Common myeloid progenitor, CD34-positive (primary cell): ENCODE measurements at regions of chr14 and their contacts with region 1.

Region 1: GRCh38 chr14:93953263-93953662 is 23.1 kb downstream of the ASB2 start:
- DNase-seq: no peak
- H3K4me3 ChIP-seq: no peak overlapping the region
- H3K27ac ChIP-seq: no peak overlapping the region
- H3K4me1 ChIP-seq: peaks cover 2 to 58% (median 54%) of the 10 kb centered on the region in 4 experiments
- H3K27me3 ChIP-seq: no peaks in the 10 kb centered on the region

Region 2: DNA sequence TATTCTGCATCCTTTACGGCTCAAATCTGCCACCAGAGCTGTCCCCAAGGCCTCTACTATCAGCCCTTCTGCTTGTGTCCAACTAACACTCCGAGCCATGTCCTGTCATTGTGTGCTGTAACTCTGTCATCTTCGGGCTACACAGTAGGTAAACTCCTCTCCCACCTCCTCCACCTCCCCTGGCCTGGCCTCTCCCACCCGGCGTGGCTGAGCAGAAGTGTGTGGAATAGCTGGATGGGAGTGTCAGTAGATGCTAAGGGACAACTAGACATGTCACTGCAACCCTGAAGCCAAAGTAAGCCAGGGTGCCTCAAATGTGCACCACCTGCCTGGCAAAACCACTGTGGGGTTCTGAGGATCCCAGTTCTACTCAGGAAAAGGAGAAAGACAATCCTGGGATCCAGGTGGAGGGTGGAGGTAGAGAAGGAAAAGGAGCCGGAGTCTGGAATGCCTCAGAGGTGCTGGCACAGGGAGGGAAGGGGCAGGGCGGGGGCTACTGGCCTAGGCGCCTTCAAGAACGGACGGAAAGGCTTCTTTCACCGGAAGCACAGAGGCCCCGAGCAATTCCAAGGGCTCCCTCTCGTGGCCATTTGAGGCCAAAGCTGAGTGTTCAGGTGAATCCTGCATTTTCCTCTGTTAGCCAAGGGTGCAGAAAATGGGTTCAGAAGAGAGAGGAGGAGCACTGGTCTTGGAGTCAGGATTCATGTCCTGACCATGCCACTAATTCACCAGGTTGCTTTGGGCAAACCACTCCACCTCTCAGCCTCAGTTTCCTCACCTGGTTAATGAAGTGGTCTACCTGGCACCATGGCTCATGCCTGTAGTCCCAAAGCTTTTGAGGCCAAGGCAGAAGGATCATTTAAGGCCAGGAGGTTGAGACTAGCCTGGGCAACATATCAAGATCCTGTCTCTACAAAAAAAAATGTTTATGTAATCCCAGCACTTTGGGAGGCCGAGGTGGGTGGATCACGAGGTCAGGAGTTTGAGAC is 46.6 kb before region 1 on chr14:
- CTCF ChIA-PET with region 1: no interaction called
- POLR2A ChIA-PET with region 1: no interaction called
- DNase-seq: peak; percentile 17 to 46 (median 30)
- H3K4me3 ChIP-seq: no peak overlapping the region
- H3K27ac ChIP-seq: no peak overlapping the region
- H3K4me1 ChIP-seq: no peaks in the 10 kb centered on the region
- H3K27me3 ChIP-seq: peaks cover 0 to 10% (median 7%) of the 10 kb centered on the region in 5 experiments

Region 3: DNA sequence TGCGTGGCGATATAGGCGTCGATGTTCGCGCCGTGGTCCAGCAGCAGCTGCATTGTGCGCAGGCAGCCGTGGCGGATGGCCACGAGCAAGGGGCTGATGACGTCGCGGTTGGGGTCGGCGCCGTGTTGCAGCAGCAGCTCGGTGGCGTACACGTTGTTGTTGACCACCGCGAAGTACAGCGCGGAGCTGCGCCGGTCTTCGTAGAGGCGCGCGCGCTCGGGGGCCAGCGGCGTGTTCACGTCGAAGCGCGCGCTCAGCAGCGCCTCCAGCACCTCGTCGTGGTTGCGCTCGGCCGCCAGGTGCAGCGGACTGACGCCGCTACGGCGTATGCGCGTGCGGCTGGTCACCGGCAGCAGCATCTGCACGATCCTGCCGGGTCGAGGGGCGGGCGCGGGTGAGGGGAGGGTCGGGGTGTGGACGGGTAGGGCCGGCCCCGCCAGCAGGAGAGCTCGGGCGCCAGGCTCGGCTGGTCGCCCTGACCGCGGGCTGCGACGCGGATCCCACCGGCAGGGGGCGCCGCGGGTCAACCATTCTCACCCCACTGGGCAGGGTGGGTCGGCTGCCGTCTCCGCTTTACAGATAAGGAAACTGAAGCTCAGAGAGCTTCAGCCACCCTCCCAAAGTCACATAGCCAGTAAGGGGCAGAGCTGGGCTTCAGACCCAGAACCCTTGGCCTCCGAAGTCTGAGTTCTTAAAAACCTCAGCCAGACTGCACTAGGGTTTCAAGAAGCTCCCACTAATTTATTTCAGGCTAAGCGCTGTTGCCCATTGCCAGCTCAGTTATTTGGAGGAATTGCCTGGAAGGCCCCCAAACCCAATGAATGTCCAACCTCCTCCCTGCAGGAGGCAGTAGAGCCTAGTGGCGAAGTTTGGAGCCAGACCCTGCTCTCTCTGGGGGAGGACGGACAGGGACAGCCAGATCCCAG is 13.7 kb before region 1 on chr14:
- CTCF ChIA-PET with region 1: interaction called, 632 read pairs
- POLR2A ChIA-PET with region 1: no interaction called
- DNase-seq: peak; percentile 81 to 87 (median 84)
- H3K4me3 ChIP-seq: peak overlapping the region in 6 of 7 experiments; percentile 23 to 73 (median 42)
- H3K27ac ChIP-seq: no peak overlapping the region
- H3K4me1 ChIP-seq: peaks cover 0 to 9% (median 7%) of the 10 kb centered on the region in 4 experiments
- H3K27me3 ChIP-seq: peaks cover 0 to 17% (median 7%) of the 10 kb centered on the region in 5 experiments